Activated CD4-positive, alpha-beta memory T cell treated with anti-CD3 and anti-CD28 coated beads for 36 hours (primary cell): ENCODE measurements at regions of chr15 and their contacts with region 1.

Region 1: DNA sequence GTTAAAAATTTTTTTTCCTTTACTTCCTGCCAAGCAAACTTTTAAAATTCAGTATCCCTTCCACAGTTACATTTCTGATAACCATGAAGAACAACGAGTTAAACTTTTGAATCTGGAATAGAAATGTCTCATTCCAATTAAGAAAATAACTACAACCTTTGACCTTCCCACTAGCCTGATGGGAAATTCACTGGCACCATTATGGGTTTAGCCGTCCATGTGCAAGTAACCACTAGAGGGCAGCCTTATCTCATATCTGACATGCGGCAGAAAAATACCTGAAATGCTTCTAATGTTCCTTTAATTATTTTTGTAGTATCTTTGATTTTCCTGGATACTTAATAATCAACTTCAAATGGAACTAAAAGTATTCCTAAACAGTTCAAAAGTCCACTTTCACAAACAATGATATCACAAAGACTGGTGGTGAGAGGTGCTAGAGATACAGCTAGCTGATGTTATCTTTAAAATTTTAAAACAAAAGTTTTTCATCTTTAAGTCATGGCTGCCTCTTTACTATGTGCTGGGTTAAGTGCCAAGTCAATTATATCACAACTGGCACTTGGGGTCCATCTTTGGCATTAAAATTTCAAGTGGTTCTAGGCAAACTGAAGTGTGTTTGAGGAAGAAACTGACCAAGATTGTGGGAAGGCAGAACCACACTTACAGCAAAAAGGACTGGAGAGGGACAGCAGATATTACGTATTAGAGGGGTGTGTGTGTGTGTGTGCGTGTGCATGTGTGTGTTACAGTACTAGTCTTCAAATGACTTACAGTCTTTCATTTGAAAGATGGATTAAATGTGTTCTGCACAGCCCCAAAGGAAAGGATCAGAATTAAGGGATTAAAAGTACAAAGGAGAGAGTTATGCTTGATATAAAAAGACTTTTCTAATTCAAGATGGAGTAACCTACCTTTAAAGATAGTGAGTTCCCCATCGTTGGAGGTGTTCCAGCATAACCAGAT is 107.1 kb upstream of the ICE2 start:
- DNase-seq: peak; percentile 69
- H3K4me3 Mint-ChIP-seq: peak overlapping the region; percentile 63
- H3K27ac Mint-ChIP-seq: peak overlapping the region; percentile 67
- H3K4me1 Mint-ChIP-seq: peaks cover 78% of the 10 kb centered on the region
- H3K27me3 Mint-ChIP-seq: no peaks in the 10 kb centered on the region

Region 2: GRCh38 chr15:60255390-60255789 is 330.6 kb before region 1 on chr15:
- CTCF ChIA-PET with region 1: no interaction called
- POLR2A ChIA-PET with region 1: no interaction called
- intact Hi-C with region 1: no loop called
- DNase-seq: peak; percentile 60
- H3K4me3 Mint-ChIP-seq: no peak overlapping the region
- H3K27ac Mint-ChIP-seq: no peak overlapping the region
- H3K4me1 Mint-ChIP-seq: peaks cover 3% of the 10 kb centered on the region
- H3K27me3 Mint-ChIP-seq: peaks cover 30% of the 10 kb centered on the region

Region 3: GRCh38 chr15:60397772-60398445 is 188.1 kb before region 1 on chr15 and contains the start of gene ANXA2:
- CTCF ChIA-PET with region 1: no interaction called
- POLR2A ChIA-PET with region 1: interaction called, 5 read pairs
- intact Hi-C with region 1: loop called (anchors 2 kb)
- DNase-seq: peak; percentile 89
- H3K4me3 Mint-ChIP-seq: peak within 1 kb of the TSS; percentile 93
- H3K27ac Mint-ChIP-seq: peak within 1 kb of the TSS; percentile 91
- H3K4me1 Mint-ChIP-seq: peaks cover 45% of the 10 kb centered on the region
- H3K27me3 Mint-ChIP-seq: peaks cover 2% of the 10 kb centered on the region
- total RNA-seq, gene ANXA2: 131 to 132 TPM

Region 4: GRCh38 chr15:60548101-60548500 is 37.9 kb before region 1 on chr15:
- CTCF ChIA-PET with region 1: interaction called, 88 read pairs
- POLR2A ChIA-PET with region 1: interaction called, 26 read pairs
- intact Hi-C with region 1: no loop called
- DNase-seq: peak; percentile 88
- H3K4me3 Mint-ChIP-seq: peak overlapping the region; percentile 60
- H3K27ac Mint-ChIP-seq: peak overlapping the region; percentile 88
- H3K4me1 Mint-ChIP-seq: peaks cover 98% of the 10 kb centered on the region
- H3K27me3 Mint-ChIP-seq: no peaks in the 10 kb centered on the region

Region 5: DNA sequence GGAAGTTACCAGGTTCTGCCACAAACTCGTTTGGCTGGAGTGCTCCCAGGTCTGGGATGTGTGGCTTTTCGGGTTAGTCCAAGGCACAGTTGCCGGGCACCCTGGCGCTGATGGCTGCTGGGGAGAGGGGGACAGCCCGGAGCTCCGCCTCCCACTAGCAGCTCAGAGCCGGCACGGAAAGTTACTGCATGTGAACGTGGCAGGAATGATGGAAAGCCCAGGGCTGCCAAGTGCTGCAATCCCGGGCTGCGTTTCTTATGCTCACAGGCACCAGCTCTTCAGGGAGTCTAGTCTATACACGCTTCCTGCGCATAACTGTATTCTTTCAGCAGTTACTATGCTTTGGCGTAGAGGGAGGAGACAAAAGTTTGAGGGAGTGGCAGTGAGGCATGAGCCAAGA is 34.7 kb after region 1 on chr15:
- CTCF ChIA-PET with region 1: no interaction called
- POLR2A ChIA-PET with region 1: no interaction called
- intact Hi-C with region 1: no loop called
- DNase-seq: no peak
- H3K4me3 Mint-ChIP-seq: no peak overlapping the region
- H3K27ac Mint-ChIP-seq: no peak overlapping the region
- H3K4me1 Mint-ChIP-seq: no peaks in the 10 kb centered on the region
- H3K27me3 Mint-ChIP-seq: no peaks in the 10 kb centered on the region

Region 6: DNA sequence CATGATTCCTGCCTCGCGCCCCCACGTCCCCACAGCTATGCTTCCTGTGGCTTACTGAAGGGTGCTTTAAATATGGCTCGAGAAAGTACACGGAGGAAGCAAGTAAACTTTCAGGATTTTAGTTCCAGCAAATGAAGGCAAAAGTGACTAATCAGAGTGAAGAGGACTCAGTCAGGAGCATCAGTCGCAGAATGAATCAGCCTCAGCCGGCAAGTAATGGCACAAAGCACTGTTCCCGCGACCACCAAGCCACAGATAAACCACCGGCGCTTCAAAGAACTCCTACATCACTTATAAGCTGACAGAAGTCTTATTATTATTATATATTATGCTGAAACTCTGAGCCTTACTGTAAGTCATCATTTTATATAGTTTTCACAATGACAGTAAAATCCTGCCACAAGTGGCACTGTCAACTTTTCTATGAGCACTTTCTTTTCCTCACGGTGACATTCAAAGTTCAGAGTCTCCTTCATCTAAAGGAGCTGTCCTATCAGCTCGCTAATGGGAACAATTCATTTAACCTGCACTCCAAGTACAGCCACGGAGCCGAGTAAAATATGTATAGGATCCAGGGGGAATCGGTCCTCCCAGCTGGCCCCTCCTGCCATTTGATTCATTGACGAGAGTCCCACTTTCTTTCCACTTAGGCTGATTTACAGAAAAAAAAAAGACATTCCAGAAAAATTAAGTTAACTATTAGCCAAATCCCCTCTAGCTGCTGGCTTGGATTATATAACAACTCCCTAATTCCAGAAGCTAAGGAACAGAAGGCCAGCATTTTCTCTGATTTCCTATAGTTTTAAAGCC is 109.9 kb after region 1 on chr15:
- CTCF ChIA-PET with region 1: interaction called, 7 read pairs
- POLR2A ChIA-PET with region 1: interaction called, 7 read pairs
- intact Hi-C with region 1: loop called (anchors 2 kb)
- DNase-seq: peak; percentile 95
- H3K4me3 Mint-ChIP-seq: peak overlapping the region; percentile 57
- H3K27ac Mint-ChIP-seq: peak overlapping the region; percentile 80
- H3K4me1 Mint-ChIP-seq: peaks cover 84% of the 10 kb centered on the region
- H3K27me3 Mint-ChIP-seq: no peaks in the 10 kb centered on the region

Region 7: DNA sequence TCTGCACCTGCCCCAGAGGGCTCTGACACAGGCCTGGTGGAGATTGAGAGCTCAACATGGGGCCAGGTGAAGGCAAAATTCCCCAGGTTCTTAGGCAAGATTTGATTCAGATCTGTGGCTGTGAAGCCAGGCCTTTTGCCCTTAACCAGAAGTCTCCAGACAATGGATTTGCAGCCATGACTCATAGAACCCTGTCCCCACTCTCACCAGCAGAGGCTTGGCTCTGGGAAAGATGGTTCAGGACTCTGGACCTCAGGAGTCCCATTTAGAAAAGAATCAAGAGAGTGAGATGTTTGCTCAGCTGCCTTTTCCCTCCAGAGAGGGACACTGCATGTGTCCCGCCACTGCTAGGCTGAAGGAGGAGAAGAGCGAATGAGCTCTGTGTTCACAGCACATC is 254.3 kb after region 1 on chr15:
- CTCF ChIA-PET with region 1: interaction called, 8 read pairs
- POLR2A ChIA-PET with region 1: interaction called, 4 read pairs
- intact Hi-C with region 1: loop called (anchors 2 kb)
- DNase-seq: peak; percentile 36
- H3K4me3 Mint-ChIP-seq: peak overlapping the region; percentile 68
- H3K27ac Mint-ChIP-seq: peak overlapping the region; percentile 74
- H3K4me1 Mint-ChIP-seq: peaks cover 74% of the 10 kb centered on the region
- H3K27me3 Mint-ChIP-seq: peaks cover 3% of the 10 kb centered on the region

Region 8: DNA sequence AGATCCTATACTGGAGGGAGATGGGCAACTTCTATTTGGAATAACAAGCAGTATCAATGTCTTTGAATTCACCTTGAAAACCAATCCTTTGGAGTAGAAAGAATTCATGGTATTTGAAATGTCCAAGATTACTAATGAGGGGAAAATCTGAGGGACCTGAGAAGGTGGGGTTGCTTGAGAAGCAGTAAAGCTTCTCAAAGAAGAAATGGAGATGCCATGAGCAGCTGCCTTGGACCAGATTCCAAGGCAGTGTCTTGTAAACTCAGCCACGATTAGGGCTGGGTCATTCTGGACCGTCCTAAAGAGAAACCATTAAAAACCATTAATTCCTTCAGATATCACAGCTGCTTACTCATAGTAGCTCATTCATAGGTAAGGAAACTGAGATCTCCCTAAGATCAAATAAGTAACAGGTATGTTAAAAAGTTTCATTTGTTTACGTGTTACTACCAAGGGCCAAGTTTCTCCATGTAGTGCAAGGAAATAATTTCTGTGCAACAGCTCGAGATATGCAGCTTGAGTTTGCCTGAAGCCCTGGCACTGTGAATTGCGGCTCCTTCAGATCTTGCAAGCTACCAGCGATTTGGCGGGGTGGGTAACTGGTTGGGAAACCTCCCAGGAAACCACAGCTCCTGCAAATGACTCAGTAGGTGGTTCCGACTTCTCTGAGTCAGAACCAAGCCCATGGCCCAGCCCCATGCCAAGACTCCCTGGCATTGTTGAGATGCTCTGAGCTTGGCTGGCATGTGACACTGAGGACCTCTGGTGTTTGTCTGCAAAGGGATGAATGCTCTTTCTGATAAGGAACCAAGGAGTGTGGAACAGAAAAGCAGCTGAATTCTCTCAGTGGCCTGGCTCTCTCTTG is 346.3 kb after region 1 on chr15:
- CTCF ChIA-PET with region 1: interaction called, 57 read pairs
- POLR2A ChIA-PET with region 1: interaction called, 5 read pairs
- intact Hi-C with region 1: loop called (anchors 2 kb)
- DNase-seq: peak; percentile 86
- H3K4me3 Mint-ChIP-seq: no peak overlapping the region
- H3K27ac Mint-ChIP-seq: no peak overlapping the region
- H3K4me1 Mint-ChIP-seq: peaks cover 15% of the 10 kb centered on the region
- H3K27me3 Mint-ChIP-seq: peaks cover 7% of the 10 kb centered on the region